CD4-positive, alpha-beta memory T cell (primary cell): ENCODE measurements at regions of chr22 and their contacts with region 1.

Region 1: GRCh38 chr22:41940832-41941765 is 5.9 kb downstream of the CENPM start:
- DNase-seq: peak; percentile 86 to 90 (median 89)
- H3K4me3 ChIP-seq: peak overlapping the region in 1 of 2 donors; percentile 41
- H3K4me3 Mint-ChIP-seq: peak overlapping the region; percentile 66 to 98 (median 92)
- H3K27ac ChIP-seq: peak overlapping the region; percentile 95
- H3K27ac Mint-ChIP-seq: peak overlapping the region; percentile 98 to 100 (median 100)
- H3K4me1 ChIP-seq: peaks cover 40% of the 10 kb centered on the region
- H3K4me1 Mint-ChIP-seq: peaks cover 36 to 61% (median 44%) of the 10 kb centered on the region in 4 donors
- H3K27me3 ChIP-seq: no peaks in the 10 kb centered on the region
- H3K27me3 Mint-ChIP-seq: no peaks in the 10 kb centered on the region

Region 2: GRCh38 chr22:41468381-41469217 is 472.5 kb before region 1 on chr22 and contains the starts of genes ACO2 and PHF5A:
- CTCF ChIA-PET with region 1: no interaction called
- POLR2A ChIA-PET with region 1: interaction called, 7 read pairs
- intact Hi-C with region 1: loop called (anchors 5 kb)
- DNase-seq: peak; percentile 98
- H3K4me3 ChIP-seq: peak within 1 kb of the TSS; percentile 67 to 90
- H3K4me3 Mint-ChIP-seq: peak within 1 kb of the TSS; percentile 86 to 95 (median 92)
- H3K27ac ChIP-seq: peak within 1 kb of the TSS; percentile 89
- H3K27ac Mint-ChIP-seq: peak within 1 kb of the TSS; percentile 96 to 100 (median 99)
- H3K4me1 ChIP-seq: peaks cover 28% of the 10 kb centered on the region
- H3K4me1 Mint-ChIP-seq: peaks cover 29 to 56% (median 44%) of the 10 kb centered on the region in 4 donors
- H3K27me3 ChIP-seq: no peaks in the 10 kb centered on the region
- H3K27me3 Mint-ChIP-seq: no peaks in the 10 kb centered on the region
- total RNA-seq, gene ACO2: 64.8 to 65.0 TPM
- total RNA-seq, gene PHF5A: 37.7 to 39.2 TPM

Region 3: DNA sequence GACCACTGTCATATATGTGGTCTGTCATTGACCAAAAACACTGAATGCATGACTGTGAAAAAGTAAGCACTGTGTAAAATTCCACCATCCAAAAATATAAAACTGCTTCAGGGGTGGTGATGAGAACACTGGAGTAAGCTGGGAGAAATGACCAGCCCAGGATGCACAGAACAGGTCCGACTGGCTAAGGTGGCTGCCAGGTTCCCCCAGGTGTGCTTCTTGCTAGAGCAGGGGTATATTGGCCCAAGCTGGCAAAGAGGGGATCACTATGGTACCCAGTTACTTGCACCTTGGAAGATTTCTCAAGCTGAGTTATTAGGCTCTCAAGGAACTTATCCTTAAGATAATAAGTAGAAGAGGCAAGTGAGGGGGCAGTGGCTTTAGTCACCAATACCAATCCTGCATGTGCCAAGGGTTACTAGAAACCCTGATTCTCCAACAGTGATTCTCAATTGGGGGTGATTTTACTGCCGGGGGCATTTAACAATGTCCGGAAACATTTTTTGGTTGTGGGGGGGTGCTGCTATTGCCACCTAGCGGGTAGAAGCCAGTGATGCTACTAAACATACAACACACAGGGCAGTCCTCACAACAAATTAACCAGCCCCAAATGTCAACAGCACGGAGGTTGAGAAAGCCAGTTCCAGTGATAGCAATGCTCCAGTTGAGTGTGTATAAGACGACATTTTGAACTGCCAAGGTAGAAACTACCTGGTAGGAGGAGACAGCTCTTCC is 268.2 kb before region 1 on chr22:
- CTCF ChIA-PET with region 1: interaction called, 12 read pairs
- POLR2A ChIA-PET with region 1: interaction called, 21 read pairs
- intact Hi-C with region 1: no loop called
- DNase-seq: no peak
- H3K4me3 ChIP-seq: no peak overlapping the region
- H3K4me3 Mint-ChIP-seq: no peak overlapping the region
- H3K27ac ChIP-seq: no peak overlapping the region
- H3K27ac Mint-ChIP-seq: peak overlapping the region in 3 of 7 donors; percentile 20 to 66 (median 22)
- H3K4me1 ChIP-seq: peaks cover under 1% of the 10 kb centered on the region
- H3K4me1 Mint-ChIP-seq: peaks cover 8 to 21% (median 16%) of the 10 kb centered on the region in 4 donors
- H3K27me3 ChIP-seq: no peaks in the 10 kb centered on the region
- H3K27me3 Mint-ChIP-seq: no peaks in the 10 kb centered on the region

Region 4: GRCh38 chr22:41746567-41747400 is 194.3 kb before region 1 on chr22:
- CTCF ChIA-PET with region 1: interaction called, 91 read pairs
- POLR2A ChIA-PET with region 1: interaction called, 31 read pairs
- intact Hi-C with region 1: loop called (anchors 1 kb)
- DNase-seq: peak; percentile 48 to 66 (median 51)
- H3K4me3 ChIP-seq: no peak overlapping the region
- H3K4me3 Mint-ChIP-seq: no peak overlapping the region
- H3K27ac ChIP-seq: no peak overlapping the region
- H3K27ac Mint-ChIP-seq: peak overlapping the region in 1 of 7 donors; percentile 2
- H3K4me1 ChIP-seq: no peaks in the 10 kb centered on the region
- H3K4me1 Mint-ChIP-seq: peaks cover 0 to 5% (median 1%) of the 10 kb centered on the region in 4 donors
- H3K27me3 ChIP-seq: no peaks in the 10 kb centered on the region
- H3K27me3 Mint-ChIP-seq: peaks cover 0 to 2% of the 10 kb centered on the region in 2 donors

Region 5: GRCh38 chr22:41822317-41823060 is 118.6 kb before region 1 on chr22:
- CTCF ChIA-PET with region 1: interaction called, 52 read pairs
- POLR2A ChIA-PET with region 1: interaction called, 63 read pairs
- intact Hi-C with region 1: loop called (anchors 1 kb)
- DNase-seq: peak; percentile 69 to 81 (median 72)
- H3K4me3 ChIP-seq: no peak overlapping the region
- H3K4me3 Mint-ChIP-seq: no peak overlapping the region
- H3K27ac ChIP-seq: peak overlapping the region; percentile 19
- H3K27ac Mint-ChIP-seq: peak overlapping the region; percentile 47 to 92 (median 76)
- H3K4me1 ChIP-seq: peaks cover 5% of the 10 kb centered on the region
- H3K4me1 Mint-ChIP-seq: peaks cover 5 to 14% (median 10%) of the 10 kb centered on the region in 4 donors
- H3K27me3 ChIP-seq: no peaks in the 10 kb centered on the region
- H3K27me3 Mint-ChIP-seq: no peaks in the 10 kb centered on the region

Region 6: GRCh38 chr22:41910050-41911000 is 30.8 kb before region 1 on chr22:
- CTCF ChIA-PET with region 1: interaction called, 13 read pairs
- POLR2A ChIA-PET with region 1: interaction called, 67 read pairs
- intact Hi-C with region 1: loop called (anchors 2 kb)
- DNase-seq: peak in 4 of 5 donors; percentile 34 to 54 (median 41)
- H3K4me3 ChIP-seq: peak overlapping the region in 1 of 2 donors; percentile 9
- H3K4me3 Mint-ChIP-seq: peak overlapping the region in 7 of 8 donors; percentile 46 to 80 (median 65)
- H3K27ac ChIP-seq: no peak overlapping the region
- H3K27ac Mint-ChIP-seq: no peak overlapping the region
- H3K4me1 ChIP-seq: peaks cover 43% of the 10 kb centered on the region
- H3K4me1 Mint-ChIP-seq: peaks cover 16 to 42% (median 26%) of the 10 kb centered on the region in 4 donors
- H3K27me3 ChIP-seq: peaks cover 20% of the 10 kb centered on the region
- H3K27me3 Mint-ChIP-seq: peaks cover 20 to 25% of the 10 kb centered on the region in 2 donors

Region 7: DNA sequence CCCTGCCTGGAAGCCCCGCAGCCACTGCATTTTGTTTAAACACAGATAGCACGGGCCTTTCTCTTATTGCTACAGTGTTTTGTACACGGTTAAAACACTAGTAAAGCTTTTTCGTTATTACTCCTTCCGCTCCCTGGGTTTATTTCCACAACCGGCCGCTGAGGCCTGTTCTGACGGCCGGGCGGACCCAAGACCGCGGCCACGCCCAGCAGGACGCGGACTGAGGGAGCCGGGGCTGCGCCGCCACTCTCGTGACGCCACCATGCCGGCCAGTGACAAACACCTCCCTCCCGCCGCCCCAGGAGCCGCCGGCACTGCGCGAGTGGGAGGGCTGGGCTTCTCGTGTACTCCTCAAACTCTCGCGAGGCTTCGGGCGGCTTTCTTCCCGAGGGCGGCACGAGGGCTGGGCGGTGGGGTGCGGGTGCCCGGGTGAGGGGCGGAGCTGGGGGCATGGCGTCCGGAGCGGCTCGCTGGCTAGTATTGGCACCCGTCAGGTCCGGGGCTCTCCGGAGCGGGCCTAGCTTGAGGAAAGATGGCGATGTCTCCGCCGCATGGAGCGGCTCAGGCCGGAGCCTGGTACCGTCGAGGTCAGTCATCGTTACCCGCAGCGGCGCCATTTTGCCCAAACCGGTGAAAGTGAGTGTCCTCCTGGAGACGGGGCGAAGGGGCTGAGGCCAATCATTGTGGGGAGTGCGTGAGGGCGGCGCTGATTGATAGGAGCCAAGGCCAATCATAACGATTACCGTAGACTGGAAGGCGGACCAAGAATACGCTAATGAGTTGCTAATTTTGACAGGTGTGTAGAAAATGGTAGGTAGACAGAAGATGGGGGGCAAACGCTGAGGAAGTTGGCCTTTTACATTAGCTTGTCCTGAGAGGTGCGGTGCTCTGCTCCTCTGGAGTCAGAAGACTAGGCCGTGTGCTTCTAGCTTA is 138.5 kb after region 1 on chr22 and contains the start of gene SMDT1:
- CTCF ChIA-PET with region 1: interaction called, 6 read pairs
- POLR2A ChIA-PET with region 1: interaction called, 20 read pairs
- intact Hi-C with region 1: no loop called
- DNase-seq: peak; percentile 98 to 99 (median 99)
- H3K4me3 ChIP-seq: peak within 1 kb of the TSS; percentile 70 to 78
- H3K4me3 Mint-ChIP-seq: peak within 1 kb of the TSS; percentile 88 to 98 (median 96)
- H3K27ac ChIP-seq: peak within 1 kb of the TSS; percentile 97
- H3K27ac Mint-ChIP-seq: peak within 1 kb of the TSS; percentile 93 to 100 (median 99)
- H3K4me1 ChIP-seq: peaks cover 38% of the 10 kb centered on the region
- H3K4me1 Mint-ChIP-seq: peaks cover 19 to 58% (median 38%) of the 10 kb centered on the region in 4 donors
- H3K27me3 ChIP-seq: no peaks in the 10 kb centered on the region
- H3K27me3 Mint-ChIP-seq: no peaks in the 10 kb centered on the region
- total RNA-seq, gene SMDT1: 101 to 105 TPM